HEK293T (cell line): ENCODE measurements at regions of chr1 and their contacts with region 1.

Region 1: GRCh38 chr1:201447911-201448871 is 20.8 kb downstream of the PHLDA3 start:
- DNase-seq: peak; percentile 85

Region 2: GRCh38 chr1:201436393-201436792 is 11.8 kb before region 1 on chr1:
- CTCF ChIA-PET with region 1: interaction called, 39 read pairs
- POLR2A ChIA-PET with region 1: interaction called, 4 read pairs
- DNase-seq: peak; percentile 63